Activated B cell treated with CpG ODN at 0.5 μM for 24 hours (primary cell): ENCODE measurements at regions of chr14 and their contacts with region 1.

Region 1: DNA sequence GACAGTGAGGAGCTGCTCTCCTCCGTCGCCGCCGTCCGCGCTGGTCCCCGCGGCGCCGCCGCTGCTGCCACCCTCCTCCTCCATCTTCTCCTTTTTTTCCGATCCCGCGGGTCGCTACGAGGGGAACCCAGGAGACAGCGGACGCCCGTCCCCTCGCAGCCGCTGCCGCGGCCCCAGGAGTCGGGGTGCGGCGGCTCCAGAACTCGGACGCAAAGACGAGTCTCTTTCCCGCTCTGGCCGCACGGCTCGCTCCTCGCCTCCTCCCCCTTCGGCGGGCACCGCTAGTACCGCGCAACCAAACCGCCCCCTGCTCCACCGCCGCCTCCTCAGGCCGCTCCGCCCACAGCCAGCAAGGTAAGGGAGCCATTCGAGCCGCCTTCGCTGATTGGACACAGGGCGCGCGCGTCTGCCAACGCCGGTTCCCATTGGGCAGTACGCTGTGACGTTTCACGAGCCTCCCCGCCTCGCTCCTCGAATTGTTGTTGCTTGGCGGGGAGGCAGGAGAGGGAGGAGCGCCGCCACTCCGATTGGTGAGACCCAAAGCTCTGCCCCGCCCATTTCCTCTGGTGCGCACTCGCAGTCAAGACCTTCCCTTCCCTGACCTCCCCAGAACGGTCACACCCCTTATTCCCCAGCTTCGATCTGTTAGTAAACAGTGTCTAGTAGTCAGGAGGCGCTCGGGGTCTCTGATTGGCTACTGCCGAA is at the start of gene RPS6KA5:
- DNase-seq: peak; percentile 95
- ATAC-seq: peak; percentile 82
- H3K4me3 Mint-ChIP-seq: peak within 1 kb of the TSS; percentile 87
- H3K27ac Mint-ChIP-seq: peak within 1 kb of the TSS; percentile 78
- H3K4me1 Mint-ChIP-seq: peaks cover 41% of the 10 kb centered on the region
- H3K27me3 Mint-ChIP-seq: no peaks in the 10 kb centered on the region
- CTCF ChIP-seq: no peak
- total RNA-seq, gene RPS6KA5: 13.3 and 16.3 TPM in 2 replicates

Region 2: GRCh38 chr14:90753456-90754005 is 307.0 kb before region 1 on chr14:
- CTCF ChIA-PET with region 1: no interaction called
- POLR2A ChIA-PET with region 1: no interaction called
- intact Hi-C with region 1: no loop called
- DNase-seq: no peak
- ATAC-seq: no peak
- H3K4me3 Mint-ChIP-seq: no peak overlapping the region
- H3K27ac Mint-ChIP-seq: no peak overlapping the region
- H3K4me1 Mint-ChIP-seq: peaks cover 8% of the 10 kb centered on the region
- H3K27me3 Mint-ChIP-seq: peaks cover 2% of the 10 kb centered on the region
- CTCF ChIP-seq: no peak

Region 3: DNA sequence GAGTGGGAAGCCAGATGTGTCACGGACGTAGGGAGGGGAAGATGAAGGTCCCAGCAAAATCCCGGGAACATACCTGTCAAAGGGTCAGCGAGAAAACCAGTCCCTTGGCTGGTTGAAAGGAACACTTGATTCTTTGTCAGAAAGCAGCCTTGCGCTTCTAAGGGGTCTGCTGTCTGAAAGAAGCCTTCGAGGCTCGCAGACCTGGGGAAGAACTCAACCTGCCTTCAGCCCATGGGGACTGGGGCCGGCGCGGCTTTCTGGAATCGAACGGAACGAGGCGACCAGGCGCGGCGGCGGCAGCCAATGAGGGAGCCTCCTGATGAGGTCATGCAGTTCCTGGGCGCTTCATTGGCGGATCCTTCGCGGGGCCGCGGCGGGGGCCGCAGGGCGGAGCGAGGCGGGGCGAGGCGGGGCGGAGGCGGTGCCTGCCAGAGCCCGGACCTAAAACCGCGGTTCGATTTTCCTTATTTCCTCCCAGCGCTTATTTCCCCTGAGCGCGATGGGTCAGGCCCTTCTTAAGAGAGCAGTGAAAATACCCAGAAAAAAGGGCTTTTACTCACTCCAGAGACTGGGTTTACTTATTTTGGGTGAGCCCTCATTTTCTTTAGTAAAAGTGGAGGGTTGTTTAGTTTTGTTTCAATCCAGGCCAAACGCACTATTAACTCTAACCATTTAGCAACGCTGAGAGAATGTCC is 232.4 kb before region 1 on chr14:
- CTCF ChIA-PET with region 1: no interaction called
- POLR2A ChIA-PET with region 1: no interaction called
- intact Hi-C with region 1: loop called (anchors 2 kb)
- DNase-seq: peak; percentile 88
- ATAC-seq: peak; percentile 100
- H3K4me3 Mint-ChIP-seq: peak overlapping the region; percentile 81
- H3K27ac Mint-ChIP-seq: peak overlapping the region; percentile 65
- H3K4me1 Mint-ChIP-seq: peaks cover 12% of the 10 kb centered on the region
- H3K27me3 Mint-ChIP-seq: no peaks in the 10 kb centered on the region
- CTCF ChIP-seq: no peak

Region 4: GRCh38 chr14:91009501-91010152 is 50.9 kb before region 1 on chr14:
- CTCF ChIA-PET with region 1: interaction called, 4 read pairs
- POLR2A ChIA-PET with region 1: interaction called, 38 read pairs
- intact Hi-C with region 1: loop called (anchors 1 kb)
- DNase-seq: no peak
- ATAC-seq: peak; percentile 87
- H3K4me3 Mint-ChIP-seq: peak overlapping the region; percentile 75
- H3K27ac Mint-ChIP-seq: peak overlapping the region; percentile 92
- H3K4me1 Mint-ChIP-seq: peaks cover 57% of the 10 kb centered on the region
- H3K27me3 Mint-ChIP-seq: no peaks in the 10 kb centered on the region
- CTCF ChIP-seq: no peak

Region 5: DNA sequence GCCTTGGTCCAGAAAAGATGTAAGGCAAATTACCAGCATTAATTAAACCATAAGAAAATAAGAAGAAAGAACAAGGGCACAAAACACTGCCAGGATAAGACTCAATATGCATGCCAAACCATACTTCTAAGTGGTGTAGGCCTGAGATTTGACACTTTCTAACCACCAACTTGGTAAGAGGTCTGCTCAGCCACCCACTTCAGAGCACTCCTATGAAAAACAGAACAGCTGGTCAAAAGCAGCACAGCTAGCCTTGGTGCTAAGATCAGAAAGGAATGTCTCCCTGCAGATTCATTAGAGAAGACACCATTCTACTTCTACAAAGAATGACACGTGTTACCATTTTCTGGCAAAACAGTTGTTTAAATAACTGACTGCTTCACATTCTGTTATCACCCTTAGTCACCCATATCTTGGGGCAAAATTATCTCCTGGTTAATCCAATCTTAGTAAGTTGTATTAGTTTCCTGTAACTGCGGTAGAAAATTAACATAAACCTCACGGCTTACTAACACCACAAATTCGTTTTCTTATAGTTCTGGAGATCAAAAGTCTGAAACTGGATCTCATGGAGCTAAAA is 13.2 kb before region 1 on chr14:
- CTCF ChIA-PET with region 1: interaction called, 4 read pairs
- POLR2A ChIA-PET with region 1: interaction called, 22 read pairs
- intact Hi-C with region 1: loop called (anchors 1 kb)
- DNase-seq: no peak
- ATAC-seq: peak; percentile 21
- H3K4me3 Mint-ChIP-seq: peak overlapping the region; percentile 47
- H3K27ac Mint-ChIP-seq: peak overlapping the region; percentile 42
- H3K4me1 Mint-ChIP-seq: peaks cover 47% of the 10 kb centered on the region
- H3K27me3 Mint-ChIP-seq: no peaks in the 10 kb centered on the region
- CTCF ChIP-seq: no peak

Region 6: GRCh38 chr14:91177073-91178034 is 116.9 kb after region 1 on chr14:
- CTCF ChIA-PET with region 1: interaction called, 11 read pairs
- POLR2A ChIA-PET with region 1: interaction called, 13 read pairs
- intact Hi-C with region 1: loop called (anchors 1 kb)
- DNase-seq: peak; percentile 29
- ATAC-seq: peak; percentile 80
- H3K4me3 Mint-ChIP-seq: no peak overlapping the region
- H3K27ac Mint-ChIP-seq: no peak overlapping the region
- H3K4me1 Mint-ChIP-seq: peaks cover 5% of the 10 kb centered on the region
- H3K27me3 Mint-ChIP-seq: no peaks in the 10 kb centered on the region
- CTCF ChIP-seq: peak; percentile 55

Region 7: DNA sequence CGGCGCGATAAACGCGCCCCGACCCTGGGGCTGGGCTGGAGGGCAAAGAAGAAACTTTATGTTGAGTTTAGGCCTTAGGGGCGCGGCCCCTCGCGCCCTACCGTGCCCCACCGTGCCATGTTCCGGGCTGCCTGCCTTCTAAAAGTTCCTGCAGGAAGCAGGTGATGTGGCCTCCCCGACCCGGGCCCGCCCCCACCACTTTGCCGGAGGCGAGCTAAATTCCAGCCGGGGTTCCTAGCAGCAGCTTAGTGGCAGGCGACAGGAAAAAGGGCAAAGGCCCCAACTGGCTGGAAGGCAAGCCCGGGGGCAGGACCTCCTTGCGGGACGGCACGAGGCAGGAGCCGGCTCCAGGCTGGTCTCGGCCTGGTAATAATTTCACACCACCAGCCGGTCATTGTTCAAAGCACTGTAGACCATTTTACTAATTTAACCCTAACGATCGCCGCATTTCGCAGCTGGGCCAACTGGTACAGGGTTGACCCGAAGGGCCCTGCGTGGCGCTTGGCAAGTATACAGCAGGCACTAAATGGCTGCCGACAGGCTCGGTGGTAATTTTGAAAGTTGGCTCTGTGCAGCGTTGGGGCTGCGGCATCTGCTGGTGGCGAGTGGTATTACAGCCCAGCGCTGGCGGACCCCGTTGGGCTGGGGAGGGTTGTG is 358.0 kb after region 1 on chr14:
- CTCF ChIA-PET with region 1: no interaction called
- POLR2A ChIA-PET with region 1: interaction called, 6 read pairs
- intact Hi-C with region 1: loop called (anchors 2 kb)
- DNase-seq: peak; percentile 84
- ATAC-seq: peak; percentile 37
- H3K4me3 Mint-ChIP-seq: peak overlapping the region; percentile 81
- H3K27ac Mint-ChIP-seq: peak overlapping the region; percentile 93
- H3K4me1 Mint-ChIP-seq: peaks cover 42% of the 10 kb centered on the region
- H3K27me3 Mint-ChIP-seq: no peaks in the 10 kb centered on the region
- CTCF ChIP-seq: peak; percentile 36